ENCODE measurements at regions of chr2 and their contacts with region 1.

Region 1: DNA sequence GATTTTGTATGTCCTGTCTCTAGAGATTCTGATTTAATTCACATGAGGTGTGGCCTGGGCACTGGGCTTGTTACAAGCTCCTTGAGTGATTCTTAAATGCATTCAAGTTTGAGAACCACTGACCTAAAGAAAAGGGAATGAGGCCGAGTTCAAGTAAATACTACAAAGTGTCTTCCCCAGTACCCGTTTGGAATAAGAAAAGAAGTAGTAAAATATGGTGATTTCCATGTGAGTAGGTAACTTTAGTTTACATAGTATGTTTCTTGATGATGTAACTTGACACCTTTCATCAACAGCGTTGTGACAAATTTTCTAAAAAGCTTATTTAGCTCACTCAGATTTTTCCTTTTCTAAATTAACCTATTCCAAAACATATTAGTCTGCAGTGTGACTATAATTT is 1022.9 kb upstream of the NRXN1 start:
- DNase-seq: no peak
- H3K4me3 ChIP-seq: no peak overlapping the region
- H3K27ac ChIP-seq: no peak overlapping the region
- H3K4me1 ChIP-seq: no peaks in the 10 kb centered on the region
- H3K27me3 ChIP-seq: no peaks in the 10 kb centered on the region
- CTCF ChIP-seq: no peak

Region 2: GRCh38 chr2:52074130-52074719 is 19.4 kb after region 1 on chr2:
- intact Hi-C with region 1: loop called (anchors 1 kb)
- DNase-seq: no peak
- H3K4me3 ChIP-seq: no peak overlapping the region
- H3K27ac ChIP-seq: no peak overlapping the region
- H3K4me1 ChIP-seq: no peaks in the 10 kb centered on the region
- H3K27me3 ChIP-seq: no peaks in the 10 kb centered on the region
- CTCF ChIP-seq: no peak